Heart left ventricle (tissue), 16 donors: ENCODE measurements at regions of chr6 and their contacts with region 1.

Region 1: GRCh38 chr6:119147101-119148053 is 68.9 kb upstream of the FAM184A start:
- DNase-seq: peak in 3 of 5 donors; percentile 40 to 71 (median 70)
- ATAC-seq: peak; percentile 47 to 98 (median 84)
- H3K4me3 ChIP-seq: no peak overlapping the region
- H3K27ac ChIP-seq: peak overlapping the region in 6 of 12 donors; percentile 5 to 83 (median 24)
- H3K4me1 ChIP-seq: peaks cover 0 to 23% (median 11%) of the 10 kb centered on the region in 12 donors
- H3K27me3 ChIP-seq: no peaks in the 10 kb centered on the region
- CTCF ChIP-seq: no peak
- POLR2A ChIP-seq: no peak

Region 2: GRCh38 chr6:119340796-119341487 is 193.6 kb after region 1 on chr6:
- intact Hi-C with region 1: loop called in 7 of 10 experiments (anchors 5 to 10 kb)
- DNase-seq: no peak
- ATAC-seq: peak in 2 of 4 donors; percentile 30 to 46
- H3K4me3 ChIP-seq: peak overlapping the region in 1 of 12 donors; percentile 3
- H3K27ac ChIP-seq: peak overlapping the region in 6 of 12 donors; percentile 11 to 59 (median 32)
- H3K4me1 ChIP-seq: peaks cover 0 to 94% (median 19%) of the 10 kb centered on the region in 12 donors
- H3K27me3 ChIP-seq: no peaks in the 10 kb centered on the region
- CTCF ChIP-seq: no peak
- POLR2A ChIP-seq: no peak

Region 3: GRCh38 chr6:119720160-119720559 is 572.8 kb after region 1 on chr6:
- intact Hi-C with region 1: loop called in 1 of 10 experiments (anchors 10 kb)
- DNase-seq: no peak
- ATAC-seq: no peak
- H3K4me3 ChIP-seq: no peak overlapping the region
- H3K27ac ChIP-seq: no peak overlapping the region
- H3K4me1 ChIP-seq: peaks cover 0 to 13% (median 0%) of the 10 kb centered on the region in 12 donors
- H3K27me3 ChIP-seq: no peaks in the 10 kb centered on the region
- CTCF ChIP-seq: peak in 2 of 12 donors; percentile 10 to 23
- POLR2A ChIP-seq: no peak

Region 4: GRCh38 chr6:119736296-119737021 is 589.1 kb after region 1 on chr6:
- intact Hi-C with region 1: loop called in 1 of 10 experiments (anchors 10 kb)
- DNase-seq: no peak
- ATAC-seq: no peak
- H3K4me3 ChIP-seq: no peak overlapping the region
- H3K27ac ChIP-seq: no peak overlapping the region
- H3K4me1 ChIP-seq: no peaks in the 10 kb centered on the region
- H3K27me3 ChIP-seq: no peaks in the 10 kb centered on the region
- CTCF ChIP-seq: no peak
- POLR2A ChIP-seq: no peak

Region 5: GRCh38 chr6:119978274-119978889 is 831.0 kb after region 1 on chr6:
- intact Hi-C with region 1: loop called in 2 of 10 experiments (anchors 10 kb)
- DNase-seq: no peak
- ATAC-seq: no peak
- H3K4me3 ChIP-seq: no peak overlapping the region
- H3K27ac ChIP-seq: no peak overlapping the region
- H3K4me1 ChIP-seq: no peaks in the 10 kb centered on the region
- H3K27me3 ChIP-seq: no peaks in the 10 kb centered on the region
- CTCF ChIP-seq: peak in 11 of 12 donors; percentile 12 to 54 (median 34)
- POLR2A ChIP-seq: no peak